HCT116 (cell line): ENCODE measurements at regions of chr3 and their contacts with region 1.

Region 1: DNA sequence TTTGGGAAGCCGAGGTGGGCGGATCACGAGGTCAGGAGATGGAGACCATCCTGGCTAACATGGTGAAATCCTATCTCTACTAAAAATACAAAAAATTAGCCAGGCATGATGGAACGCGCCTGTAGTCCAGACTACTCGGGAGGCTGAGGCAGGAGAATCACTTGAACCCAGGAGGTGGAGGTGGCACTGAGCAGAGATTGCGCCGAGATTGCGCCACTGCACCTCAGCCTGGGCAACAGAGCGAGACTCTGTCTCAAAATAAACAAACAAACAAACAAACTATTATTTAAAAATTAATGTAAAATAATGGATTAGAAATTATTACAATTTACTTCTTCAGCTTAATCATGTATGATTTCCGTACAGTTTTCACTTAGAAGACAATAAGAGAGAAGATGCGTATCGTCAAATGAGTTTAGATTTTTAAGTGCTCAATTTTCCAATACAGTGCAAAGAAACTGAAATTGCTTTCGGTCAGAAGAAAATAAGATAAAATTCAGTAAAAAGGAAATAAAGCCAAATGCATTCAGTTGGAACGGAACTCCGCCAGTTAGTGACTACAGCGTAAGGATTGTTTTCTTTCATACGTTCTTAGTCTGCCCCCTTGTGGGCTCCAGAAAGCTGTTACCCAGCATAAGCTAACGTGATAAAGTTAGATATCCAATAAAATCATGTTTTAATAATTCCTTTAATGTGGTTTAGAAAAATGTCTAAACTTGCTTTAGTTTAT is 24.8 kb downstream of the AADAC start:
- DNase-seq: peak; percentile 75
- ATAC-seq: peak; percentile 80
- H3K4me3 ChIP-seq: peak overlapping the region; percentile 12 to 21; a peak in 2 of 4 replicates
- H3K27ac ChIP-seq: no peak overlapping the region
- H3K4me1 ChIP-seq: peaks cover 22 to 30% of the 10 kb centered on the region in 2 experiments
- H3K27me3 ChIP-seq: no peaks in the 10 kb centered on the region
- CTCF ChIP-seq: peak; percentile 73 to 81 (median 75)
- POLR2A ChIP-seq: no peak
- RAD21 ChIP-seq: peak; percentile 94

Region 2: DNA sequence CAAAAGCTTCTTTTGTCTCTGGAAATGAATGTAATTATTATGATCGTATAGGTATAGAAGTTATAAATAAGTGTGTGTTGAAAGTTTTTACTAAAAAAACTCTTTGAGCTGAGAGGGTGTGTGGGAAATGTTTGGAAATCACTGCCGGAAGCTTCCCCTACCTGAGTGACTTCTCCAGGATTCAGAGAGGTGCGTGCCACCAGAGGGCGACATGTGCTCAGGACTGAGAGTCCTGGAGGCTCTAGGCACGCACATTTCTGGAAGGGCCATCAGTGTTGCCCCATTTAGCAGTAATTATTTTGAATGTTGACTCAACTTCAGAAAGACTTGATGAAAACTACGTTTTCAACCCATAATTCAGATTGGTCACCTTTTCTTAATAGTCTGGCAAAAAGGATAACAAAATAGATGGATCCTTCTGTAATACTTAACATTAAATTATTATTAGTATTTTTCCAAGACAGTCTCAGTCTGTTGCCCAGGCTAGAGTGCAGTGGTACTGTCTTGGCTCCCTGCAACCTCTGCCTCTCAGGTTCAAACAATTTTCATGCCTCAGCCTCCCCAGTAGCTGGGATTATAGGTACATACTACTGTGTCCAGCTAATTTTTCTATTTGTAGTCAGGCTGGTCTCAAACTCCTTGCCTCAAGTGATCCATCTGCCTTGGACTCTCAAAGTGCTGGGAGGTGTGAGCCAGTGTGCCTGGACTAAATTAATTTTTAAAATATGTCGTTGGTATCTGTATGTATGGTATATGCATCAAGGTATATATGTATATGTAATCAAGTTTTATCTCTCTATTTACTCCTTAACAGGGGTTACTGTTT is 670.3 kb before region 1 on chr3:
- CTCF ChIA-PET with region 1: no interaction called
- POLR2A ChIA-PET with region 1: no interaction called
- RAD21 ChIA-PET with region 1: no interaction called
- intact Hi-C with region 1: loop called (anchors 5 kb)
- DNase-seq: peak; percentile 47
- ATAC-seq: peak; percentile 99
- H3K4me3 ChIP-seq: no peak overlapping the region
- H3K27ac ChIP-seq: no peak overlapping the region
- H3K4me1 ChIP-seq: no peaks in the 10 kb centered on the region
- H3K27me3 ChIP-seq: no peaks in the 10 kb centered on the region
- CTCF ChIP-seq: peak; percentile 78 to 90 (median 88)
- POLR2A ChIP-seq: no peak
- RAD21 ChIP-seq: peak; percentile 91

Region 3: DNA sequence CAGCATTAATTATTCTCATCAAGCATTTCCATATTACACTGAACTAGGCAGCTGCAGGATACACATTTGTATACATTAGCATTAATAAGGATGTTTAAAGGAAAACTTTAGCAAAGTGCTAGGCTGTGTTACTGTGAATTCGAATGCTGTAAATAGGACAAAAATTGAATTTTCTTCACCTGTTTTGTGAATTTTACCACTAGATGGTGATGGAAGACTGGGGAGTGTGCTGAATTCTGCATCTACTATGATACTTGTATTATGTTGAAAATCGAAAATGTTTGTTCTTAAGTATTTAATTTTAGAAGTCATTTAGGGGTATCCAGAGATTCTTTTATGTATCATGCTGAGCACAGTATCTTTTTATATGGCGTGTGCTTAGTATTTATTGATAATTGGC is 548.1 kb before region 1 on chr3:
- CTCF ChIA-PET with region 1: interaction called, 7 read pairs
- POLR2A ChIA-PET with region 1: no interaction called
- RAD21 ChIA-PET with region 1: interaction called in 1 of 2 experiments, 3 read pairs
- intact Hi-C with region 1: loop called (anchors 1 kb)
- DNase-seq: peak; percentile 29
- ATAC-seq: no peak
- H3K4me3 ChIP-seq: no peak overlapping the region
- H3K27ac ChIP-seq: no peak overlapping the region
- H3K4me1 ChIP-seq: no peaks in the 10 kb centered on the region
- H3K27me3 ChIP-seq: no peaks in the 10 kb centered on the region
- CTCF ChIP-seq: peak; percentile 28 to 76 (median 68); a peak in 5 of 6 replicates
- POLR2A ChIP-seq: no peak
- RAD21 ChIP-seq: peak; percentile 90

Region 4: GRCh38 chr3:151425627-151426335 is 413.0 kb before region 1 on chr3:
- CTCF ChIA-PET with region 1: interaction called, 13 read pairs
- POLR2A ChIA-PET with region 1: interaction called, 5 read pairs
- RAD21 ChIA-PET with region 1: no interaction called
- intact Hi-C with region 1: no loop called
- DNase-seq: no peak
- ATAC-seq: peak; percentile 68
- H3K4me3 ChIP-seq: no peak overlapping the region
- H3K27ac ChIP-seq: no peak overlapping the region
- H3K4me1 ChIP-seq: 0 out of 4 replicates have a peak, but pooled peaks cover 0 to 6% of the 10 kb centered on the region in 2 experiments
- H3K27me3 ChIP-seq: no peaks in the 10 kb centered on the region
- CTCF ChIP-seq: peak in 2 of 3 experiments; percentile 78 to 84; a peak in 4 of 6 replicates
- POLR2A ChIP-seq: no peak
- RAD21 ChIP-seq: peak; percentile 40; the same call in 1 of the 2 replicates

Region 5: DNA sequence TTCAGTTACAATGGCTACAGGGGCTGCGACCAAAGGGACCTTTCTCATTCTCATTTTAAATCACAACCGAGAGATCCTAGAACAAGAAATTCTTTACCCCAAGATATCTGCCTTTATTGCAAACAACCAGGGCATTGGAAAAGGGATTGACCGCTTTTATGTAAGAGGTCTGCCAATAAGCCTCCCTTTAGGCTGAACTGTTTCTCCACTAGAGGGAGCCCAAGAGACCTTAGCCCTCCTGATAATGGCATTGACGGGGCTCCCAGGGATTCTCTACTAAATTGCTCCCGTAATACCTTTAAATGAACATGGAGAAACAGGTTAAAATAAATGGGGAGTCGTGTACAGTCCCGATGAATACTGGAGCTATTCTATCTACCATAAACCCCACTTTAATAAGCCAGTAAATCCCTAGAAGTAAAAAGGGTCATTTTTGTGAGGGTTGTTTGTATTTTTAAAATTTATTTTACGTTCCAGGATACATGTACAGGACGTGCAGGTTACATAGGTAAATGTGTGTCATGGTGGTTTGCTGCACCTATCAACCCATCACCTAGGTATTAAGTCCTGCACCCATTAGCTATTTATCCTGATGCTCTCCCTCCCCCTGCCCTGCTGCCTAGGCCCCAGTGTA is 370.3 kb before region 1 on chr3:
- CTCF ChIA-PET with region 1: interaction called, 10 read pairs
- POLR2A ChIA-PET with region 1: no interaction called
- RAD21 ChIA-PET with region 1: interaction called in 1 of 2 experiments, 5 read pairs
- intact Hi-C with region 1: loop called (anchors 1 kb)
- DNase-seq: peak; percentile 73
- ATAC-seq: peak; percentile 99
- H3K4me3 ChIP-seq: no peak overlapping the region
- H3K27ac ChIP-seq: no peak overlapping the region
- H3K4me1 ChIP-seq: no peaks in the 10 kb centered on the region
- H3K27me3 ChIP-seq: no peaks in the 10 kb centered on the region
- CTCF ChIP-seq: peak; percentile 66 to 94 (median 92)
- POLR2A ChIP-seq: no peak
- RAD21 ChIP-seq: peak; percentile 71

Region 6: GRCh38 chr3:151949706-151950105 is 111.0 kb after region 1 on chr3:
- CTCF ChIA-PET with region 1: no interaction called
- POLR2A ChIA-PET with region 1: no interaction called
- RAD21 ChIA-PET with region 1: no interaction called
- intact Hi-C with region 1: no loop called
- DNase-seq: no peak
- ATAC-seq: no peak
- H3K4me3 ChIP-seq: no peak overlapping the region
- H3K27ac ChIP-seq: no peak overlapping the region
- H3K4me1 ChIP-seq: no peaks in the 10 kb centered on the region
- H3K27me3 ChIP-seq: no peaks in the 10 kb centered on the region
- CTCF ChIP-seq: no peak
- POLR2A ChIP-seq: no peak
- RAD21 ChIP-seq: no peak

Region 7: DNA sequence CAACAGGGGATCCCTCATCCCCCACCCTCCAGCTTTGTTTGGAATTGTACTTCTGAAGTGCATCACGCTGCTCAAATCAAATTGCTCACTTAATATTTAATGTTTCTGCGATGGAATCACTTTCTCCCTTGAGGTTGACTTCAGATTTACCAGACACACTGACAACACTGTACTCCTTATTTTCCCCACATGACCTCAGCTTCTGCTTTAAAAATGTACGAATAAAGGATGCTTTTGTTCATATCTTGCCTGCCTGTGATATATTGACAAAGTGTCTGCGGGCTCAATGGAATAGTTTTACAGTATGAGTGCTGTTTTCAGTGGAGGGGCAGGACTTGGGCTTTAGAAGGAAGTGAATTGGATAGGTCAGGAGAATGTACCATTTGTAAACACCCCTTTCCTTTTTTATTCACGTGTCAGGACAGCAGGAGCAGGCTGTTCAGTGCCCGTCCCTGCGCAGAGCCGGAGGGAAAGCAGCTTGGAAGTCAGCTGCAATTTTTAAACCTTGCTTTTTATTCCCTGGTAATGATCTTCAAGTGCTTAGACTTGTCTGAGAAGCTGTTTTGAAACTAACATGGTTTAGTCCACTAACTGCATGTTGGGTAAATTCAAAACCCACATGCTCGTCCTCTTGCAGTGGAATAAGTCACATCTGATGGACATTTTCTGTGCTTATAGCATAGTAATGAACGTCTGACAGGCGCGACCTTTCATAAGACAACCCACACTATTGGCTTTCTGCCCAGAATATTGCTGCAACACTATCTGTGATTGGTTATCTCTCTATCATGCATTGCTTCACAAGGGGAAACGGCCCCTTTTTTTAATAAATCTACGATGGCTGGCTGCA is 459.9 kb after region 1 on chr3:
- CTCF ChIA-PET with region 1: no interaction called
- POLR2A ChIA-PET with region 1: no interaction called
- RAD21 ChIA-PET with region 1: no interaction called
- intact Hi-C with region 1: no loop called
- DNase-seq: no peak
- ATAC-seq: peak; percentile 68
- H3K4me3 ChIP-seq: peak overlapping the region; percentile 2 to 21; a peak in 2 of 4 replicates
- H3K27ac ChIP-seq: peak overlapping the region; percentile 47
- H3K4me1 ChIP-seq: peaks cover 64 to 81% of the 10 kb centered on the region in 2 experiments
- H3K27me3 ChIP-seq: no peaks in the 10 kb centered on the region
- CTCF ChIP-seq: no peak
- POLR2A ChIP-seq: no peak
- RAD21 ChIP-seq: no peak